Left colon (tissue), 2 donors: ENCODE measurements at regions of chr1 and their contacts with region 1.

Region 1: GRCh38 chr1:92858564-92859399 is 26.9 kb downstream of the RPL5 start:
- DNase-seq: peak; percentile 27 to 46
- ATAC-seq: peak; percentile 67

Region 2: DNA sequence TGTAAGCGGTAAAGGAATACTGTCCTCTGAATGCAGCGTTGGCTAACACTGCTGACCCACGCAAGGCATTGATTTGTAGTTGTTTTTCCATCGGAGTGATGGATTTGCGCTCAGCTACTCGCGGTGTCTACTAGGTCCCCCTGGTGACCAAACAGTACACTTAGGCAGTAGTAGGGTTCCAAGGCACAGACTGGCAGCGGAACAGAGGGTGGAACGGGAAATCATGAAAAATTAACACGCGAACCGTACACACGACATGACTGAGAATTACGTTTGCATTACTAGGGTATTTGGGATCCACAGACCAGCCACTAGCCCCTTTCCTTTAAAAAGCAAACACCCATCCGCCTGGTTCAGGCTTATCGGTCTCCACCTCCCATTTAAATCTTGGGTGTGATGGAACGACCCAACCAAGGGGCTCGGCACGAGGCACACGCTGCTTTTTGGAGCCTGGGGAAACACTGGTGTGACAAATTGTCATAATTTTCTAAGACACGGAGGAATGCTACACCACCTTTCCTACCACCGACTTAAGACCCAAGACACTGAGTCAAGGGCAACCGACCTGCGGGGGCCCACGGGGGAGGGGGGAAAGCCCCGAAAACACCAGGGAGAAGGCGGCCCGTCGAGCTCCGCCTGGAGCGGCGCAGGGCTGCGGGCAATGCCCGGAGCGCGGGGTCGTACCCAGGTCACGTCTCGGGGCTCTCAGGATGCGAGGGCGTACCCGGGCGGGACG is 101.8 kb after region 1 on chr1:
- intact Hi-C with region 1: loop called in 1 of 2 experiments (anchors 2 kb)
- DNase-seq: peak; percentile 60 to 75
- ATAC-seq: peak; percentile 67

Region 3: GRCh38 chr1:92994105-92994712 is 135.4 kb after region 1 on chr1:
- intact Hi-C with region 1: loop called (anchors 2 to 10 kb)
- DNase-seq: peak; percentile 75 to 78
- ATAC-seq: peak; percentile 73